B cell (primary cell): ENCODE measurements at regions of chr11 and their contacts with region 1.

Region 1: GRCh38 chr11:102495161-102496042 is 35.1 kb downstream of the MMP7 start:
- DNase-seq: peak; percentile 86
- ATAC-seq: peak; percentile 73
- H3K4me3 ChIP-seq: no peak overlapping the region
- H3K4me3 Mint-ChIP-seq: peak overlapping the region; percentile 55
- H3K27ac ChIP-seq: no peak overlapping the region
- H3K27ac Mint-ChIP-seq: peak overlapping the region; percentile 50
- H3K4me1 ChIP-seq: peaks cover 0 to 7% of the 10 kb centered on the region in 2 donors
- H3K4me1 Mint-ChIP-seq: peaks cover 14% of the 10 kb centered on the region
- H3K27me3 ChIP-seq: no peaks in the 10 kb centered on the region
- H3K27me3 Mint-ChIP-seq: no peaks in the 10 kb centered on the region
- CTCF ChIP-seq: peak; percentile 81

Region 2: DNA sequence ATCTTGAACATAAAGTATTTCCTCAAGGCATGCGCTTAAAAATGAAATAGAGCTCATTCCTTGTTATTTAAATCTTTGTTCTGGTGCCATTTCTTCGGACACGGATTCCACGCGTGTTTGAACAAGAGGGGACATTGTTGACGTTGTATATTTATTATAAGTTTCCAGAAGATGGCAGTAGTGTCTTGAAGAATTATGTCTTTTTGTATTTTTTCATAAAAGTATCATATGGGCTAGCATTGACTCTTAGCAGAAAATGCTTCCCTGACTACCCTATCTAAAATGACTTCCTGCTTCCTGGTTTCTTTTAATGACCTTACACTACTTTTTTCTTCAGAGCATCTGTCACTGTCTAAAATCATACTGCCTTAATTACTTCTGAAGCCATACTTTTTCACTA is 128.0 kb before region 1 on chr11:
- CTCF ChIA-PET with region 1: interaction called, 33 read pairs
- POLR2A ChIA-PET with region 1: no interaction called
- intact Hi-C with region 1: loop called (anchors 1 kb)
- DNase-seq: peak; percentile 47
- ATAC-seq: no peak
- H3K4me3 ChIP-seq: no peak overlapping the region
- H3K4me3 Mint-ChIP-seq: no peak overlapping the region
- H3K27ac ChIP-seq: peak overlapping the region in 1 of 2 donors; percentile 48
- H3K27ac Mint-ChIP-seq: peak overlapping the region; percentile 1
- H3K4me1 ChIP-seq: no peaks in the 10 kb centered on the region
- H3K4me1 Mint-ChIP-seq: peaks cover 16% of the 10 kb centered on the region
- H3K27me3 ChIP-seq: no peaks in the 10 kb centered on the region
- H3K27me3 Mint-ChIP-seq: no peaks in the 10 kb centered on the region
- CTCF ChIP-seq: peak; percentile 61

Region 3: DNA sequence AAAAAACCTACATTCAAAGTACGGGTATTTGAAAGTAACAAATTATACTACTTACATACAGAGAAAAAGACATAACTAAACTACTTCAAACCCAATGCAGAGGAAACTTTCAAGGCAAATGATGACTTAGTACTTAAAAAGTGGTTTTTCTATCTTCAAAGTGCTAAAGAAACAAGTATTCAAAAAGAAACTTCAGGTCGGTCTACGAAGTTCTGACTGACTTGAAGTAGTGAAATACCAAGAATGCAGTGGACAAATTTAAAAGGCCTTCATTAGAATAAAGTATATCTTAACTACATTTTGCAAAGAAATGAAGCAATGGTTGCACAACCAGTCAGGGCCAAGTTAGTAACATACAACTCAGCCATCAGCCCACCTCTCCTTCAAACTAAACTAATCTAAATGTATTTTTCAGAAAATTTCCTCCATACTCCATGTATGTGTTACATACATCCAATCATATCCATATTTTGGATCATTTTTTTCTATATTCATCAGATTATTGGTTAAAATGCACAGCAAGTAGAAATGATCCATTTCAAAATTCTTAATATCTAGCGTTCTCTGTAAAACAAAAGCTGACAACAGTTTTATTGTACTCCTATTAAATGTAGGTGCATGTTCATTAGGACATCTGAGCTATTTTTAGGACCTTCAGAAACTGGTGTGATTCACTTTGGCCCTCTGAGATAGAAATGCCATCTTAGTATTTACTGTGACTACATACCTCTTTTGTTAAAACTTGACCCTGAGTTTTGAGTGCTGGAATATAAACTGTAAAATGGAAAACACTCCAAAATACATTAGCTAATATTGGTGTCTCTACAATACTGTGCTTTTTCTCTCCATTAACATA is 98.5 kb before region 1 on chr11:
- CTCF ChIA-PET with region 1: interaction called, 99 read pairs
- POLR2A ChIA-PET with region 1: no interaction called
- intact Hi-C with region 1: no loop called
- DNase-seq: no peak
- ATAC-seq: no peak
- H3K4me3 ChIP-seq: no peak overlapping the region
- H3K4me3 Mint-ChIP-seq: no peak overlapping the region
- H3K27ac ChIP-seq: no peak overlapping the region
- H3K27ac Mint-ChIP-seq: no peak overlapping the region
- H3K4me1 ChIP-seq: no peaks in the 10 kb centered on the region
- H3K4me1 Mint-ChIP-seq: peaks cover 16% of the 10 kb centered on the region
- H3K27me3 ChIP-seq: no peaks in the 10 kb centered on the region
- H3K27me3 Mint-ChIP-seq: no peaks in the 10 kb centered on the region
- CTCF ChIP-seq: no peak

Region 4: DNA sequence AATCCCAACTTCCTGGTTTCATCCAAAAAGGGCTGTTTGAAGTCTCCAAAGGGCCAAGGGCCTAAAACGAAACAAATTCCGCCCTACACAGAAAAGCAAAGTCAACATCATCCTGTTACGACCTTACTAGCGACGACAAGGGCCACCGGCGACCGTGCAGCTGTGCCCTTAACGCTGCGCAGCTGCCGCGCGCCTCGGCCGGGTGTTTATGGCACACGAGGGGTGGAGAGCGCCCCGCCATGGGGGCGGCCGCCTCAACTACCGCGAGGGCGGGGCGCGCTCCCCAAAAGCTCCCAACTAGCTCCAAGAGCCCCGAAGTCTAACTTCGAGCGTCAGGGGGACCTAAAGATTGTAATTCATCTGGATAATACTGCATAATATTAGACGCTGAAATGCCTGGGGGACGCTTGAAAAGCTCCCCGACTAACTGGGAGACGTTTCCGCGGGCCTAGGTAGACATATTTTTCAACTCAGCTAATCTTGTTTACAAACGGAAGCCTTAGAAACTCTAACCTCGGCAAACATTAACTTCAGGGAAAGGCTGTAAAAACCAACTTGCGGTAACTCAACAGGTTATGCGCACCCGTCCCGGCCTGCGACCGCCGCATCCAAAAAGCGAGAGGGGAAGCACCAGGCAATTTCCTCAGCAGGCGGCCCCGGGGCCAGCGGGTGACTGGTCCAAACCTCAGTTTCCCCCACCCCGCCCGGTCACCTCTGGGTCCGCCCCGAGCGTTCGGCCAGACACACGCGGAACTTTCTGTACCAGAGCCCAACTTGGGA is 43.5 kb before region 1 on chr11:
- CTCF ChIA-PET with region 1: interaction called, 10 read pairs
- POLR2A ChIA-PET with region 1: no interaction called
- intact Hi-C with region 1: loop called (anchors 1 kb)
- DNase-seq: peak; percentile 88
- ATAC-seq: peak; percentile 58
- H3K4me3 ChIP-seq: peak overlapping the region; percentile 83 to 98 (median 91)
- H3K4me3 Mint-ChIP-seq: peak overlapping the region; percentile 98
- H3K27ac ChIP-seq: peak overlapping the region; percentile 82 to 87
- H3K27ac Mint-ChIP-seq: peak overlapping the region; percentile 98
- H3K4me1 ChIP-seq: peaks cover 56 to 59% of the 10 kb centered on the region in 2 donors
- H3K4me1 Mint-ChIP-seq: peaks cover 73% of the 10 kb centered on the region
- H3K27me3 ChIP-seq: no peaks in the 10 kb centered on the region
- H3K27me3 Mint-ChIP-seq: no peaks in the 10 kb centered on the region
- CTCF ChIP-seq: no peak

Region 5: DNA sequence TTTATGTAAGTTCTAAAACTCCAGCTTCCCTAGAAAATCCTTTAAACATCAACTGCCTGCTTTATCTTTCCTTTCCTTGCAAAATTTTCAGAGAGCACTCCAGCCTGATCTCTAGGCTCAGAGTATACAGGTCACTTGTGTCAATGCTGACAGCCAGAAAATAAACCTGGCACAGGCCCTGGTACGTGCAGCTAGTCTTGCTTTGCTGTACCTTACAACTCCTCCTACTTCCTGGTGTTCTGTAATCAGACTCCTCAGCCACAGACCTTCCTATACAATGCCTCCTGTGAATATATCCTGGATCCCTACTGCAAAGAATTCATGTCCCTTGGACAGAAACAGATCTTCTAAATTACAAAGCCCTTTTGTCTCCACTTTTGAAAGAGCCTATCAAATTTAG is 18.6 kb before region 1 on chr11:
- CTCF ChIA-PET with region 1: interaction called, 5 read pairs
- POLR2A ChIA-PET with region 1: no interaction called
- intact Hi-C with region 1: loop called (anchors 1 kb)
- DNase-seq: no peak
- ATAC-seq: no peak
- H3K4me3 ChIP-seq: no peak overlapping the region
- H3K4me3 Mint-ChIP-seq: peak overlapping the region; percentile 69
- H3K27ac ChIP-seq: no peak overlapping the region
- H3K27ac Mint-ChIP-seq: peak overlapping the region; percentile 76
- H3K4me1 ChIP-seq: peaks cover 28% of the 10 kb centered on the region in 2 donors
- H3K4me1 Mint-ChIP-seq: peaks cover 42% of the 10 kb centered on the region
- H3K27me3 ChIP-seq: peaks cover 0 to 3% (median 0%) of the 10 kb centered on the region in 4 experiments
- H3K27me3 Mint-ChIP-seq: peaks cover 7% of the 10 kb centered on the region
- CTCF ChIP-seq: no peak

Region 6: DNA sequence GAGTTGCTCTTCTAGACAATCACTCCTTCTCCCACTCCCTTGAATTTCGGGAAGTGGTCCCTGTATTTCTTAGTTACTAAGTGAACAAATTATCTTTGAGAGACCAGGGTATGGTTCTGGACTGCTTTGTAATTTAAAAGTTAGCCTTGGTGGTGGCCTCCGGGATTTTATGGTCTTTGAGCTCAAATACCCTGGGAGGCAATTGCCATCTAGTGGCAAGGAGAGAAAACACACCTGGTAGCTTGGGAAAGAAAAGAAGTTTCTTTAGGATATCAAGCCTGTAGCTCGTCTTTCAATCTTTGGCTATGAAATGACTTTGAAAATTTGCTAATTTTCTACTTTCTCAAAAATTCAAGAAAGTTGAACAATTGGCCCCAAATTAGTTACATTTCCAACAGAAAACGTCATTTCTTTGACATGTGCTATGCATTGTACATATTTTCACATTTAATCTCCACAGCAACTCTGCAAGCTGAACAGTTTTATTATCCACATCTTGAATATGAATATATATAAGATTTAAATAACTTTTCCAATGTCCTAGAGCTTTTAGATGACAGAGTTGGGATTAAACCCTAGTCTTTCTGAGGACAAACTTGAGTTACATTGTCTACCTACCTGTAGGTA is 171.0 kb after region 1 on chr11:
- CTCF ChIA-PET with region 1: interaction called, 12 read pairs
- POLR2A ChIA-PET with region 1: no interaction called
- intact Hi-C with region 1: loop called (anchors 1 kb)
- DNase-seq: peak; percentile 55
- ATAC-seq: peak; percentile 36
- H3K4me3 ChIP-seq: no peak overlapping the region
- H3K4me3 Mint-ChIP-seq: no peak overlapping the region
- H3K27ac ChIP-seq: no peak overlapping the region
- H3K27ac Mint-ChIP-seq: no peak overlapping the region
- H3K4me1 ChIP-seq: peaks cover 0 to 5% of the 10 kb centered on the region in 2 donors
- H3K4me1 Mint-ChIP-seq: no peaks in the 10 kb centered on the region
- H3K27me3 ChIP-seq: no peaks in the 10 kb centered on the region
- H3K27me3 Mint-ChIP-seq: peaks cover 3% of the 10 kb centered on the region
- CTCF ChIP-seq: peak; percentile 82